ENCODE measurements at regions of chr14 and their contacts with region 1.

Region 1: DNA sequence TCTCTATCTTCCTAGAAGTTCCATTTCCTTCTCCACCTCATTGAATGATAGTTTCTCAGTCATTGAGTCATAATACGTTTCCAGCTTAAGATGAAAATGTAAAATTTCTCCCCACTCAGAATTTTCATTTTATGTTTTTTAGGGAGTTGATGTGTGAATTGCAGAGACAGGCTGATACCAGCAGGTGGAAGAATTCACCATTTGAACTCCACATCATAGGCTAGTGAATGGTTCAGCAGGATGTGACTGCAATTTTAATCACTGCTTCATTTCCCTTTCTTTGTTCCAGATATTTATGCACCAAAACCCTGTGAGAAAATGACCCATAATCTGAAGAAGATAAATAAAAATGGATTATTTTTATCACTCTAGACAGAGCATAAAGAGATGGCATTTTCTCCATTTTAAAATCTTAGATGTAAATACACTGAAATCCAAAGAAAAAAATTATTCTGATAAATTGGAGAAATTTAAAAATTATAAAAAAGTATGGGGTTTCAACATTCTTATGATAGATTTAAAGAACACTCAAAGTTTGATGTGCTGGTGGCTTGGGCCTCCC is 10.6 kb upstream of the PYGL start:
- DNase-seq: peak; percentile 67
- H3K4me3 Mint-ChIP-seq: peak overlapping the region; percentile 24
- H3K27ac Mint-ChIP-seq: peak overlapping the region; percentile 97
- H3K4me1 Mint-ChIP-seq: peaks cover 24% of the 10 kb centered on the region
- H3K27me3 Mint-ChIP-seq: no peaks in the 10 kb centered on the region
- CTCF ChIP-seq: peak; percentile 66

Region 2: DNA sequence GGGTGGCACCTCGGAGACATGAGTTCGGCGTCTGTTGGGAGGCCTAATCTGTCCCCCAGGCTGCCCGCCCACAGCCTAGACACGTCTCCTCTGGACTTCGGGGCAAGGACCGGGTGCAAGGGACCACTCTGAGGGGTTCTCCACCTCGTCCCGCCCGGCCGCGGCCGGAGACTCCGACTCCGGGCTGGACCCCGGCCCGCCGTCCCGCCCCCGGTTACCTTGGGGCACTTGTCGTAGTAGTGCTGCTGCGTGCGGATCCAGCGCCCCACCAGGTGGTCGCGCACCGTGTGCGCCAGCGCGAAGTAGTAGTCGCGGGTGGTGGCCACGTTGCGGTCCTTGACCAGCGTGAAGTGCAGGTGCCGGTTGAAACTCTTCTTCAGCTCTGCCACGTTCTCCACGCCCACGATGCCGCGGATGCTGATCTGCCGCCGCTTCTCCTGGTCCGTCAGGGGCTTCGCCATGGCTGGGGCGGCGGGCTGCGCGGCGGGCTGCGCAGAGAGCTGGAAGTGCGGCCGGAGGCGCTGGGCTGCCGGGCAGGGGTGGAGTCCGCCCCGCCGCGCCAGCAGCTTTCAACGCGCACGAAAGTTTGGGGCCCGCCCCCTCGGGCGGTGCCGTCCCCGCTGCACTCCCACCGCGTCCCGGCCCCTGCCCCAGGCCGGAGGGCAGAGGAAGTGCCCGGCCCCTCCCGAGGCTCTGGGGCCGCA is 10.8 kb before region 1 on chr14 and contains the start of gene PYGL:
- CTCF ChIA-PET with region 1: interaction called, 5 read pairs
- POLR2A ChIA-PET with region 1: interaction called, 17 read pairs
- intact Hi-C with region 1: no loop called
- DNase-seq: peak; percentile 72
- H3K4me3 Mint-ChIP-seq: peak within 1 kb of the TSS; percentile 86
- H3K27ac Mint-ChIP-seq: peak within 1 kb of the TSS; percentile 84
- H3K4me1 Mint-ChIP-seq: peaks cover 33% of the 10 kb centered on the region
- H3K27me3 Mint-ChIP-seq: no peaks in the 10 kb centered on the region
- CTCF ChIP-seq: no peak
- total RNA-seq, gene PYGL: 75.4 and 87.3 TPM in 2 replicates

Region 3: DNA sequence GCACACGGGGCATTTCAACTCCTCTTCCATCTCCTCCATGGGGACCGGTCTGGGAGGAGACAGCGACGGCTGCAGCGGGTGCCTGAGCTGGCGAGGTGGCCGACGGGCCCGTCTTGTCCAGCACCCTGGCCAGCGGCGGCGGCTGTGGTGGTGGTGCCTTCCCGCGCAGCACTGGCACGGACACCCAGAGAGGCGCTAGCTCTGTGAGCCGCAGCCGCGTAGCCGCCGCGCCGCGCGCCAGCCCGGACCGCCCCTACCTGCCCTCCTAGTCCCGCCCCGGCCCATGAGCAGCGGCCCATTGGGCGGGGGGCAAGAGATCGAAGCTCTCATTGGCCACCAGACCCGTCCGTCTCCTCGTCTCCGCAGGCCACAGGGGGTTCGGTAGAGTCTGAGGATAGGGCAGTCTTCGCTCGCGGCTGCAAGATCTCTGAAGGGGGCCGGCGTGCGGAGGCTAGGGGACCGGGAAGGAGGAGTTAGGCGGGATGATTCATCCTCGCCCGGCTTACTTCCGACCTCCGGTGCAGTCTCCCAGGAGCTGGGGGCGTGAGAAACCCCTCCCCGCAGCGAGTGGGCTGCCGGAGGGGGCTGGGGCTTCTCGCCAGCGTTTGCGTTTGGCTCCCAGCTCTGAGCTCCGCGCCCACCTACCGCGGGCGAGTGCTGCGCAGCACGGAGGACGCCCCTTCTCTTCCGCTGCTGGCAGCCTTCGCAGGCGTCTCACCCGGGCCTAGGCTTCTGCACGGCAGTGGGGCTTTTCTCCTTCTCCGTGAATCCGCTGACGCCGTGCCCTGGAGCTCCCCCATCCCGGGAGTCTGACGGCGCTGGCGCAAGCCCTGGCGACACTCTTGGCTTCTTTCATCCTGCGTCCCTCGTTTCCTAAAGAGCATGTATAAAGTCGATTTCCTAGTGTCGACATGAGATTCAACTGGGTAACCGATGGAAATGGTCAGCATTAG is 140.3 kb after region 1 on chr14 and contains the start of gene TRIM9:
- CTCF ChIA-PET with region 1: interaction called, 3 read pairs
- POLR2A ChIA-PET with region 1: interaction called, 6 read pairs
- intact Hi-C with region 1: loop called (anchors 10 kb)
- DNase-seq: peak; percentile 98
- H3K4me3 Mint-ChIP-seq: peak within 1 kb of the TSS; percentile 85
- H3K27ac Mint-ChIP-seq: peak within 1 kb of the TSS; percentile 46
- H3K4me1 Mint-ChIP-seq: no peaks in the 10 kb centered on the region
- H3K27me3 Mint-ChIP-seq: peaks cover 21% of the 10 kb centered on the region
- CTCF ChIP-seq: no peak
- total RNA-seq, gene TRIM9: 0.19 TPM in 1 of 2 replicates, not detected in the other

Region 4: DNA sequence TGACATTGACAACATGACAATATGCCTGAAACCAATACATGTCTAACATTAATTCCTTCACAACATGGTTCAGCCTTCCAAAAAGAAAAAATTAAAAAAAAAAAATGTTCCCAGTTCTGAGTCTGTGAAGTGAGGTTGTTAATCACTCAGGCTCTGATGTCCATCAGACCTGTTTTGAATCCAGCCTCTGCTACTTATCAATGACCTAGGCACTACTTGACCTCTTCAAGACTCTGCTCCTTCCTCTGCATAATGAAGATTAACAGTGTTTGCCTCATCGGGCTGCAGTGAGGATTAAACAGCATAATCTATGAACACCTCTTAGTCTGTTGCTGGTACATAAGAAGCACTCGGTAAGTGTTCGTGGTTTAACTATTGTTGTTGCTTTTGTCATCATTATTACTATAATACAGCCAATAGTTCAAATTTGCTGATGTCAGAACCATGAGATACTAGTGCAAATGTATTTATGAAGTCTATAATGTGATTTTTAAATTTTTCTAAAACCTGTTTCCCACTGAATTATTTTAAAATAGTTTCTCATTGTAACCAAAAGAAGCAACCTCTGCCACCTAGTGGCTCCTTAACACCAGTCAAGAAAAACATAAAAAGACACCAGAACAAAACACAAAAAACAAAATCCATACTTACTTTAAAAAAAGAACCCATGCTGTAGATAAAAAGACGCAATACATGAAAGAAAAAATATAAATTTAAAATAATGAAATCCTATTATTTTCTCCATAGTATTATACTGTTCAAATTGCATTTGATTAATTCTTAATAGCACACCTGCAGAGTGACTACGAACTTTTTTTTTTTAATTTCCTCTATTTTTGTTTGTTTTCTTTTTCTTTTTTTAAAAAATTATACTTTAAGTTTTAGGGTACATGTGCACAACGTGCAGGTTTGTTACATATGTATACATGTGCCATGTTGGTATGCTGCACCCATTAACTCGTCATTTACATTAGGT is 264.9 kb after region 1 on chr14:
- CTCF ChIA-PET with region 1: interaction called, 38 read pairs
- POLR2A ChIA-PET with region 1: interaction called, 8 read pairs
- intact Hi-C with region 1: loop called (anchors 1 kb)
- DNase-seq: peak; percentile 47
- H3K4me3 Mint-ChIP-seq: no peak overlapping the region
- H3K27ac Mint-ChIP-seq: no peak overlapping the region
- H3K4me1 Mint-ChIP-seq: no peaks in the 10 kb centered on the region
- H3K27me3 Mint-ChIP-seq: no peaks in the 10 kb centered on the region
- CTCF ChIP-seq: peak; percentile 41

Measured in MCF 10A (cell line).